Breast epithelium (tissue), 4 donors: ENCODE measurements at regions of chr21 and their contacts with region 1.

Region 1: DNA sequence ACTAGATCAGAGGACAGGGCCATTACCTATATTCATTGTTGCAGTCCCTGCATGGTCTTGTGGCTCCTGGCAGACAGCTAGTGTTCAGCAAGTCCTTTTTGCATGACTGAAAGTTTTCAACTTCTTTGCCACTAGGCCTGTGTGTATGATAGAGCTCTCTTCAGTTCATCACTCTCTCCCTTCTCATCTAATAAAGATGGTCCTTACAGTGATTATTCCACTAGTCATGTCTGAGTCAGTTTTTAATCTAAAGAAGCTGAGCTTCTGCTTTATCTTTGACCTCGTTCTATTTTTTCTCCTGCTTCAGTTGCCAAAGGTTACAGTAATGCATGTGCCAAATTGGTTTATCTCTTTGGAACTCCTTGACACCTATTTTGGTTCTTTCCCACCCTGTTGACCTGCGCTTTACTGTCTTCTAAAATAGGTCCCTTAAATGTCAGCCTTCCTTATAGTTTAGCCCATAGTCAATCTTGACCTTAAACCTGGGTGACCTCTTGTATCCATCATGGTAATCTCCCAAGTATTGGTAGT is 6.4 kb downstream of the CXADR start:
- DNase-seq: no peak
- H3K4me3 ChIP-seq: no peak overlapping the region
- H3K27ac ChIP-seq: no peak overlapping the region
- H3K4me1 ChIP-seq: no peaks in the 10 kb centered on the region
- H3K27me3 ChIP-seq: no peaks in the 10 kb centered on the region
- CTCF ChIP-seq: no peak
- POLR2A ChIP-seq: no peak

Region 2: GRCh38 chr21:15742052-15742670 is 1777.1 kb before region 1 on chr21:
- intact Hi-C with region 1: no loop called
- DNase-seq: no peak
- H3K4me3 ChIP-seq: no peak overlapping the region
- H3K27ac ChIP-seq: no peak overlapping the region
- H3K4me1 ChIP-seq: no peaks in the 10 kb centered on the region
- H3K27me3 ChIP-seq: no peaks in the 10 kb centered on the region
- CTCF ChIP-seq: no peak
- POLR2A ChIP-seq: no peak

Region 3: GRCh38 chr21:17537299-17537698 is 18.0 kb after region 1 on chr21:
- intact Hi-C with region 1: loop called (anchors 2 kb)
- DNase-seq: no peak
- H3K4me3 ChIP-seq: no peak overlapping the region
- H3K27ac ChIP-seq: no peak overlapping the region
- H3K4me1 ChIP-seq: no peaks in the 10 kb centered on the region
- H3K27me3 ChIP-seq: no peaks in the 10 kb centered on the region
- CTCF ChIP-seq: no peak
- POLR2A ChIP-seq: no peak